ENCODE measurements at regions of chr6 and their contacts with region 1.

Region 1: GRCh38 chr6:28136585-28137504 is 4.8 kb upstream of the ZKSCAN8 start:
- H3K4me3 ChIP-seq: peak overlapping the region; percentile 92
- H3K27ac ChIP-seq: peak overlapping the region; percentile 77
- H3K4me1 ChIP-seq: peaks cover 10% of the 10 kb centered on the region; the same call in 1 of the 2 replicates
- CTCF ChIP-seq: peak; percentile 34; the same call in 1 of the 2 replicates

Region 2: GRCh38 chr6:27650620-27651370 is 486.1 kb before region 1 on chr6:
- CTCF ChIA-PET with region 1: no interaction called
- POLR2A ChIA-PET with region 1: no interaction called
- H3K4me3 ChIP-seq: peak overlapping the region; percentile 66
- H3K27ac ChIP-seq: peak overlapping the region; percentile 14; the same call in 1 of the 2 replicates
- H3K4me1 ChIP-seq: no peaks in the 10 kb centered on the region
- CTCF ChIP-seq: no peak

Region 3: DNA sequence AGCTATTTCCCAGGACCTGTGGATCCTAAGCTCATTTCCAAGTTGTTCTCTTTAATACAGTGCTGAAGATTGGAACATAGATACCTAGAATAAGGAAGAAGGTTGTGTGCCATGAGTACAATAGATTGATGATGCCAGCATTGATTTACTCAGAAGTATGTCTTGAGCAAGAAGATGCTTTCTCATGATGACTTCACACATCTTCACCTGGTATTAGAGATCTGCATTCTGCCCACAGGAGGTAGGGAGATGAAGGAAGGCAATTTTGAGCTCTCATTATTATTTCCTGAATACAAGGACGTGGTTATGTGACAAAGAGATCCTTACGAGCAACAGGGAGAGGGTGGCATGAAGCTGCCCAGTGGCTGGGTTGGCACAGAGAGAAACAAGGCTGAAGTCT is 76.4 kb before region 1 on chr6:
- CTCF ChIA-PET with region 1: no interaction called
- POLR2A ChIA-PET with region 1: no interaction called
- H3K4me3 ChIP-seq: no peak overlapping the region
- H3K27ac ChIP-seq: no peak overlapping the region
- H3K4me1 ChIP-seq: no peaks in the 10 kb centered on the region
- CTCF ChIP-seq: no peak

Region 4: DNA sequence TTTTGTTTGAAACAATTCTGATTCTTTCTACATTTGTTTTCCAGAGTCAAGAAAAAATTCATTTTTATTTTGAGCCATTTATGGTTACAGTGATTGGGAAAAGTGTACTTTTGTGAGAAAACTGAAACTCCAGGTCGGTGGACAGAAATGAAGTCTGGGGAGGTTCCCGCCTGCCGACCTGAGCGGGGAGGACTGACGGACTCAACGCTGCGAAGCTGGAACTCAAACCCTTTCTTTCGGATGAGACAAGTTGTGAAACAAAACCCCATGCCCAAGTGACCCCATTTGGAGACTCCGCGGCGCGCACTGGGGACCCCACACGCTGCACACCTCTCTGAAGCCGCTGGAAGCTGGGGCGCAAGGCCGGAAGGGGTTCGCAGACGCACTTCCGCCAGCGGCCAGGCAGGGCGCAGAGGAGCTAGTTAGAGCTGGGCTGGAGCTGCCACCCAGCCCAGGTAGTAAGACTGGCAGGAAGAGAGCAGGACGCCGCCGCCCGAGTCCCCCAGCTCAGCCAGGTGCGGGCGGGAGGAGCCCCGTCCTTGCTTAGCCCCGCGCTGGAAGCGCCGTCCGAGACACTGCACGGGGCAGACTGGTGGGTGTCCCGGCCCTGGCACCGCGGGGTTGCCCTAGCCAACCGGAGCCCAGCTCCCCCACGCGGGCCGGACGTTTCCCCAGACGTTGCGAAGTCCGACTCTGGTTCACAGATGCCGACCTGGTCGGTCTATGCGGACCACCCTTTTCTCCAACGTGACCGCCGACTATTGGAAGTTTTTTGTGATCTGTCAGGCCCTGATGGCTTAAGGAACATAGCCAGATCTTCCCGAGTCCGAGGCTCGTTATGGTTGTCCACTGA is 32.2 kb before region 1 on chr6:
- CTCF ChIA-PET with region 1: interaction called, 3 read pairs
- POLR2A ChIA-PET with region 1: interaction called, 23 read pairs
- H3K4me3 ChIP-seq: peak overlapping the region; percentile 62
- H3K27ac ChIP-seq: peak overlapping the region; percentile 78
- H3K4me1 ChIP-seq: no peaks in the 10 kb centered on the region
- CTCF ChIP-seq: peak; percentile 95

Region 5: DNA sequence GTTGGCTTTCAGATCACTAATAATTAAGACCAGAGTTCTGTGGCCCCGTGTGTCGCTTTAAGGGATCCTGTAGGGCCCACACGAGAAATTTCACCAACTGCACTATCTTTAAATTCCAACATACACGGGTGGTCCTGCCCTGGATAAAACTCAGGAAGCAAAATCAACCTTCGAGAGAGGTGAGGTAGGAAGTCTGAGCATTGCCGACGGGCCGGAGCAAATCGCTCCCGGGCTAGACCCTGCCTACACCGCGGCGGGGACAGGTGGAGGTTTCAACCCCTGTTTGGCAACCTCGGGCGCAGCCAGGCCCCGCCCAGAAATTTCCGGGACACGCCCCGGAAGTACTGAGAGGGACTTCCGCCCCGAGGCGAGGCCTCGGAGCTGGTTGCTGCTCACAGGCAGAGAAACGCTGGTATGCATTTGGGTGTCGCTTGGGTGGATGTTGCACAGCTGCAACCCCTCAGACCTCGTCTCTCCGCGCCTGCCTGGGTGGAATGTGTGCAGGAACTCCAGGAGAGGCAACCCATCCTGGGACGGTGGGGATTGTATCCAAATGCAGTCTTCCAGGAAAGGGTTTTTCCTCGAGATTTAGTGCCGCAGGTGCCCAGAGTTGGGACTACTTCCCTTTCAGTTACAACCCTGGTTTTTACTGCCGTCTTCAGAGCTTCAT is 24.7 kb after region 1 on chr6:
- CTCF ChIA-PET with region 1: interaction called, 3 read pairs
- POLR2A ChIA-PET with region 1: interaction called, 29 read pairs
- H3K4me3 ChIP-seq: peak overlapping the region; percentile 50
- H3K27ac ChIP-seq: peak overlapping the region; percentile 63
- H3K4me1 ChIP-seq: peaks cover 3% of the 10 kb centered on the region; the same call in 1 of the 2 replicates
- CTCF ChIP-seq: no peak; the same call in 1 of the 2 replicates

Region 6: GRCh38 chr6:28200020-28200419 is 63.2 kb after region 1 on chr6:
- CTCF ChIA-PET with region 1: no interaction called
- POLR2A ChIA-PET with region 1: no interaction called
- H3K4me3 ChIP-seq: no peak overlapping the region
- H3K27ac ChIP-seq: no peak overlapping the region
- H3K4me1 ChIP-seq: no peaks in the 10 kb centered on the region
- CTCF ChIP-seq: no peak

Region 7: GRCh38 chr6:28225056-28225834 is 88.4 kb after region 1 on chr6 and contains the start of gene ZSCAN9:
- CTCF ChIA-PET with region 1: interaction called, 3 read pairs
- POLR2A ChIA-PET with region 1: interaction called, 13 read pairs
- H3K4me3 ChIP-seq: peak within 1 kb of the TSS; percentile 74
- H3K27ac ChIP-seq: peak within 1 kb of the TSS; percentile 57
- H3K4me1 ChIP-seq: peaks cover 3% of the 10 kb centered on the region; the same call in 1 of the 2 replicates
- CTCF ChIP-seq: no peak

Region 8: DNA sequence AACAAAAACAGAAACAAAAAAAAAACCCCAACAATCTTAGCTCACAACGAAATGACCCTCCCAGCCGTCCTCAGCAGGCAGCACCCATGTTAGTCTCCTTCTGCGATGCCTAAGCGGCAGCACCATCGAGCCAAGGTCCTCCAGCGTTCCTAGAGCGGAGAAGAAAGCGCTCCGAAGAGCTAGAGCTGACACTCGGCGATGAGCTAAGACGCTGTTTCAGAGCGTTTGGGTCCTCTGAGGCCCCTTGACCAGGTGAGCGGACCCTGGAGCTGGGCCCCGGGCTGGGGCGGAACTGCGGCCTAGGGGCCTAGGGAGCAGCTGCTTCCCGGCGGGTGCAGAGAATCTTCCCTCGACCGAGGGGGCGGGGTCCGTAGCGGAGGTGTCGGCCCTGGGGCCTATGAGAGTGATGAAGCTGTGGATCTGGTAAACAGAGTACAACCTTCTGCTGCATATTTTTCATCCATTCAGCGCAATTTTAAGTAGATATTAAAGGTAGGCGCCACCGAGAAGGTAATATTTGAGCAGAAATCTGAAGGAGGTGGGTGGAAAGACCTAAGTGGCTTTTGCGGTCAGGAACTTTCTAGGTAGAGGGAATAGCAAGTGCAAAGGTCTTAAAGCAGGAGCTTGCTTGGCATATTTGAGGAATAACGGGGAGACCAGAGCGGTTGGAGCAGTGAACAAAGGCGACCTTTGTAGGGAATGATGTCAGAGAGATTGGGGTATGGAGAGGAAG is 130.3 kb after region 1 on chr6 and contains the start of gene ZSCAN26:
- CTCF ChIA-PET with region 1: no interaction called
- POLR2A ChIA-PET with region 1: interaction called, 15 read pairs
- H3K4me3 ChIP-seq: peak within 1 kb of the TSS; percentile 89
- H3K27ac ChIP-seq: peak within 1 kb of the TSS; percentile 77
- H3K4me1 ChIP-seq: peaks cover 20% of the 10 kb centered on the region; the same call in 1 of the 2 replicates
- CTCF ChIP-seq: no peak

Region 9: GRCh38 chr6:28355743-28356665 is 219.2 kb after region 1 on chr6:
- CTCF ChIA-PET with region 1: interaction called, 9 read pairs
- POLR2A ChIA-PET with region 1: interaction called, 13 read pairs
- H3K4me3 ChIP-seq: peak overlapping the region; percentile 63
- H3K27ac ChIP-seq: peak overlapping the region; percentile 4; the same call in 1 of the 2 replicates
- H3K4me1 ChIP-seq: peaks cover 3% of the 10 kb centered on the region; the same call in 1 of the 2 replicates
- CTCF ChIP-seq: peak; percentile 50; the same call in 1 of the 2 replicates